SK-N-SH (cell line): ENCODE measurements at regions of chr4 and their contacts with region 1.

Region 1: GRCh38 chr4:158193171-158193749 is 17.0 kb upstream of the TMEM144 start:
- DNase-seq: peak; percentile 30
- H3K4me3 ChIP-seq: no peak overlapping the region
- H3K27ac ChIP-seq: no peak overlapping the region
- H3K4me1 ChIP-seq: no peaks in the 10 kb centered on the region
- H3K27me3 ChIP-seq: no peaks in the 10 kb centered on the region
- CTCF ChIP-seq: peak; percentile 59
- EP300 ChIP-seq: no peak
- RAD21 ChIP-seq: peak; percentile 49

Region 2: GRCh38 chr4:157934151-157934550 is 259.1 kb before region 1 on chr4:
- CTCF ChIA-PET with region 1: no interaction called
- POLR2A ChIA-PET with region 1: no interaction called
- DNase-seq: no peak
- H3K4me3 ChIP-seq: no peak overlapping the region
- H3K27ac ChIP-seq: no peak overlapping the region
- H3K4me1 ChIP-seq: no peaks in the 10 kb centered on the region
- H3K27me3 ChIP-seq: no peaks in the 10 kb centered on the region
- CTCF ChIP-seq: no peak
- EP300 ChIP-seq: no peak
- RAD21 ChIP-seq: no peak

Region 3: GRCh38 chr4:158131027-158131426 is 62.2 kb before region 1 on chr4:
- CTCF ChIA-PET with region 1: no interaction called
- POLR2A ChIA-PET with region 1: no interaction called
- DNase-seq: no peak
- H3K4me3 ChIP-seq: no peak overlapping the region
- H3K27ac ChIP-seq: no peak overlapping the region; a peak in 1 of 4 replicates
- H3K4me1 ChIP-seq: no peaks in the 10 kb centered on the region
- H3K27me3 ChIP-seq: no peaks in the 10 kb centered on the region
- CTCF ChIP-seq: no peak
- EP300 ChIP-seq: no peak
- RAD21 ChIP-seq: no peak

Region 4: GRCh38 chr4:158182736-158183135 is 10.5 kb before region 1 on chr4:
- CTCF ChIA-PET with region 1: interaction called, 25 read pairs
- POLR2A ChIA-PET with region 1: no interaction called
- DNase-seq: peak; percentile 36
- H3K4me3 ChIP-seq: no peak overlapping the region; a peak in 1 of 4 replicates
- H3K27ac ChIP-seq: no peak overlapping the region
- H3K4me1 ChIP-seq: no peaks in the 10 kb centered on the region
- H3K27me3 ChIP-seq: no peaks in the 10 kb centered on the region
- CTCF ChIP-seq: no peak
- EP300 ChIP-seq: no peak
- RAD21 ChIP-seq: no peak